ENCODE measurements at regions of chr12 and their contacts with region 1.

Region 1: DNA sequence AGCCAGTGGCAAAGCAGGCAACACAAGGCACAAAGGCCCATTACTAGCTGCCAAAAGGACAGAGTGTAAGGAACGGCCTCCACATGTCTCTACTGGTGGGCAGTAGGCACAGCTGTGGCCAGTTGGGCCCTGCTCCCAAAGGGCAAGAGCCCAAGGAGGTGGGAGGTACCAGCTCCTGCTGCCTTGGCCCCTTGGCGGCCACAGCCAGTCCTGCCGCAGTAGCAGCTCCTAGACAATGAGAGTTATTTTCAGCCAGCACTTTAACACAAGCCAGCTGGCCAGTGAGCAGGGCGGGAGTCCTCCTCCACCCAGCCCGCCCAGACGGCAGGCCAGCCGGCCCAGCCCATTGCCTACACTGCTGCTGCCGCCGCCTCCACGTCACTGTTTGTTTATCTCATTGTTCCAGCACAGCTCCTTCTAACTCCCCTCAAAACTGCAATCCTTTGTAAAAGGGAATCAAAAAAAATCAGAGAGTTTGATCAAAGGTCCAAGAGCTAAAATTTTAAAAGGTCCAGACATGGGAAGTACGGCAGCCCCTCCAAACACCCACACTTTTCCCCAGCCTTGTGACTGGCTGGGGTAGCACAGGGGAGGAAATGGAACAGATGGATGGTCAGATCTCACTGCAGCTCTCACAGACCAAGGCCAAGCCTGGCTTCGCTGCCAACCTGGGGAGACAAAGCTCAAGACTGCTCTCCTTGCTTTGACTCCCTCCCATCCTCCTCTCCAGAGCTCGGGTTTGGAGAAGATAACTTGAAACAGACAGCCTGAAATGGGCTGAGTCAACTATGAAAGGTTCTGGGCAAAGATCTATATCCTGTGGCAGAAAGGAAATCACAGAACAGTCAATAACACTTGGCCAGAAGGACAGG is 33.5 kb downstream of the FMNL3 start:
- DNase-seq: no peak
- H3K4me3 Mint-ChIP-seq: no peak overlapping the region
- H3K27ac Mint-ChIP-seq: peak overlapping the region; percentile 98
- H3K4me1 Mint-ChIP-seq: peaks cover 85% of the 10 kb centered on the region
- H3K27me3 Mint-ChIP-seq: no peaks in the 10 kb centered on the region

Region 2: DNA sequence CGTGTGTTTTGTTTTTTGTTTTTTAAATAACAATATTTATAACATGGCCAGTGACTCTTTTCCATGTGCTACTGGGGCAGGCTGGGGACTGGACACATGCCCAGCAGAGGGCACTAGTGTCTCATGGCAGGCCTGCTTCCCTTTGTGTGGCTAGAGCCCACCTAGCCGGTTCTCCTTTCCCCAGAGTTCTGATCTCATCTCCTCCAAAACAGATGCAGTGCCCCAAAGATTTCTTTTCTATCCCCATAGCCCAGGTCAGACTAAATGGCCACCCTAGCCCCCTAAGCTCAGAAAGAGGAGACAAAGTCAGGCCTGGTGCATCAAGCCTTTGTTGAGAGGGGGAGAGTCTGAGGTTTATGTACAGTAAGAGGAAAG is 29.1 kb before region 1 on chr12:
- CTCF ChIA-PET with region 1: interaction called, 16 read pairs
- intact Hi-C with region 1: loop called (anchors 1 kb)
- DNase-seq: peak; percentile 90
- H3K4me3 Mint-ChIP-seq: no peak overlapping the region
- H3K27ac Mint-ChIP-seq: peak overlapping the region; percentile 71
- H3K4me1 Mint-ChIP-seq: peaks cover 29% of the 10 kb centered on the region
- H3K27me3 Mint-ChIP-seq: no peaks in the 10 kb centered on the region

Region 3: DNA sequence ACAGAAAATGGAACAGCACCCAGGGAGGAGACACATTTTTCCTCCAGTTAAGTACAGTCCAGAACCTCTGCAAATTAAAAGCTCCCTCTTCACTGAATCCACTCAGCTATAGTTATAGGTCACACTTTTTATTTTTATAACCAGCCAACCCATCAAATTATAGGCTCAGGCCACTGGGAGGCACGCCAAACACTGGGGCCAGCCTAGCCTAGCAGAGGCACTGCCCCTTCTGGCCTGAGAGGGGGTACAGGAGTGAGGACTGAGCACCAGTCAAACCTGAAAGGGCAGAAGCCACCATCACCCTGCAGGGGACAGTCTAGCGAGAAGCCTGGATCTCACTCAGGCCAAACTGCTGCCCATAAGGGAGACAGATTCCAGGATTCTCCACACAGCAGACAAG is 14.3 kb after region 1 on chr12:
- CTCF ChIA-PET with region 1: interaction called, 12 read pairs
- intact Hi-C with region 1: no loop called
- DNase-seq: no peak
- H3K4me3 Mint-ChIP-seq: no peak overlapping the region
- H3K27ac Mint-ChIP-seq: no peak overlapping the region
- H3K4me1 Mint-ChIP-seq: peaks cover 55% of the 10 kb centered on the region
- H3K27me3 Mint-ChIP-seq: no peaks in the 10 kb centered on the region

Region 4: GRCh38 chr12:49698619-49699545 is 25.2 kb after region 1 on chr12:
- CTCF ChIA-PET with region 1: interaction called, 54 read pairs
- intact Hi-C with region 1: loop called (anchors 1 kb)
- DNase-seq: peak; percentile 68
- H3K4me3 Mint-ChIP-seq: peak overlapping the region; percentile 63
- H3K27ac Mint-ChIP-seq: peak overlapping the region; percentile 87
- H3K4me1 Mint-ChIP-seq: peaks cover 54% of the 10 kb centered on the region
- H3K27me3 Mint-ChIP-seq: no peaks in the 10 kb centered on the region

Measured in activated naive CD4-positive, alpha-beta T cell treated with anti-CD3 and anti-CD28 coated beads for 36 hours (primary cell).